ENCODE measurements at regions of chr1 and their contacts with region 1.

Region 1: DNA sequence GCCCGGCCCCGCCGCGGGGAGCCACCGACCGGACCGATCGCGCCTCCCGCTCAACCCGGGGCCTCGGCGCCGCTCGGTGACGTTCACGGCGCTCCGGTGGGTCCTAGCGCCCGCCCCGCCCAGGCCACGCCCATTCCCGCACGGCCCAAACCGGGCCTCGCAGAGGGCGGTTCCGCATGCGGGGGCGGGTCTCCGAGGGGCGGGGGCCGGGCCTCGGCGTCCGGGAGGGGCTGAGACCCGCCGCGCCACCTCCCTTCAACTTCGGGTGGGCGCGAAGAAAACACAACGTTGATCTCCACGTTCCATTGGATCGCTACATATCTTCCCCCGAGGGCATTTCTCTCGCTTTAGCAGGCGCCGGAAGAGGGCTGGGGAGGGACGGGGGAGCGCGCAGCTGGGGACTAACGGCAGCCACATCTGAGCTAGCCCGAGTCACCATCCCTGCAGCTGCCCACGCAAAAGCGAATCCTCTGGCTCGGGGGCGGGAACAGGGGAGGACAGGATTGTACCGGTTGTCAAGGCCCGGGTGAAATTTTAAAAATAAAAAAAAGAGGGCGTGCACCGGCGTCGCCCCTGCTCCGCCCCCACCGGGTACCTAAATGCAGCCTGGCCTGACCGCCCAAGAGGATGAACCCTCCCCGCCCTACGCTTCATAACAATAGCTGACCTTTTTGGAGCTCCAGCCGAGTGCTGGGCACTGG is at the start of gene MAD2L2:
- DNase-seq: peak; percentile 65 to 75
- ATAC-seq: peak; percentile 94 to 96
- H3K4me3 ChIP-seq: peak within 1 kb of the TSS; percentile 69 to 91 (median 88)
- H3K27ac ChIP-seq: peak within 1 kb of the TSS; percentile 73 to 86 (median 82)
- H3K4me1 ChIP-seq: peaks cover 3 to 10% of the 10 kb centered on the region in 2 donors
- H3K27me3 ChIP-seq: no peaks in the 10 kb centered on the region
- CTCF ChIP-seq: no peak
- POLR2A ChIP-seq: peak; percentile 46 to 63
- total RNA-seq, gene MAD2L2: 41.2 to 57.4 (median 46.9) TPM

Region 2: GRCh38 chr1:11272832-11273594 is 408.2 kb before region 1 on chr1 and contains the start of gene UBIAD1:
- in situ Hi-C with region 1: no loop called
- intact Hi-C with region 1: loop called (anchors 5 kb)
- DNase-seq: peak; percentile 82 to 83
- ATAC-seq: peak; percentile 93 to 95
- H3K4me3 ChIP-seq: peak within 1 kb of the TSS; percentile 69 to 96 (median 92)
- H3K27ac ChIP-seq: peak within 1 kb of the TSS; percentile 93 to 99 (median 96)
- H3K4me1 ChIP-seq: peaks cover 26 to 29% of the 10 kb centered on the region in 2 donors
- H3K27me3 ChIP-seq: no peaks in the 10 kb centered on the region
- CTCF ChIP-seq: peak in 1 of 5 experiments; percentile 20
- POLR2A ChIP-seq: peak; percentile 63 to 70
- total RNA-seq, gene UBIAD1: 15.1 to 24.5 (median 20.2) TPM

Region 3: DNA sequence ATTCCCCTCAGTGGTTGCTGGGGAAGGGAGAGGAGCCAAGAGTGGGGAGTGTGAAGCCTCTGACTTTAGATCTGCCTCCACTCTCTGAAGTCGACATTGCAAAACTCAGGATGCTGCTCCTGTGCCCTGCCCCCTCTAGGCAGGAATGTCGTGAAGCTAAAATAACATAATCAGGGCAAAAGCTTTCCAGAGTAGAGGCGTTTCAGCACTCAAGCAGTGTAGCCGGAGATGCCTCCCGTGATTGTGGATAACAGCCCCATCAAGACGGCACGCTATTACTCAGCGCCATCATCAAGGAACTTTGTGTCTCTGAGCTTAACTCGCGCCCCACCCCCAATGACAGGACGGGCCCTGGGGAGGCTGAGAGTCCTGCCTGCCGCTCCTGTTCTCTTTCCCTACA is 87.0 kb before region 1 on chr1:
- in situ Hi-C with region 1: no loop called
- intact Hi-C with region 1: no loop called
- DNase-seq: no peak
- ATAC-seq: peak in 1 of 2 donors; percentile 23
- H3K4me3 ChIP-seq: no peak overlapping the region
- H3K27ac ChIP-seq: no peak overlapping the region
- H3K4me1 ChIP-seq: no peaks in the 10 kb centered on the region
- H3K27me3 ChIP-seq: peaks cover 2 to 10% (median 7%) of the 10 kb centered on the region in 3 donors
- CTCF ChIP-seq: no peak
- POLR2A ChIP-seq: no peak

Region 4: GRCh38 chr1:11670747-11671146 is 10.5 kb before region 1 on chr1:
- in situ Hi-C with region 1: no loop called
- intact Hi-C with region 1: loop called (anchors 2 kb)
- DNase-seq: no peak
- ATAC-seq: no peak
- H3K4me3 ChIP-seq: no peak overlapping the region
- H3K27ac ChIP-seq: no peak overlapping the region
- H3K4me1 ChIP-seq: no peaks in the 10 kb centered on the region
- H3K27me3 ChIP-seq: no peaks in the 10 kb centered on the region
- CTCF ChIP-seq: no peak
- POLR2A ChIP-seq: no peak

Region 5: DNA sequence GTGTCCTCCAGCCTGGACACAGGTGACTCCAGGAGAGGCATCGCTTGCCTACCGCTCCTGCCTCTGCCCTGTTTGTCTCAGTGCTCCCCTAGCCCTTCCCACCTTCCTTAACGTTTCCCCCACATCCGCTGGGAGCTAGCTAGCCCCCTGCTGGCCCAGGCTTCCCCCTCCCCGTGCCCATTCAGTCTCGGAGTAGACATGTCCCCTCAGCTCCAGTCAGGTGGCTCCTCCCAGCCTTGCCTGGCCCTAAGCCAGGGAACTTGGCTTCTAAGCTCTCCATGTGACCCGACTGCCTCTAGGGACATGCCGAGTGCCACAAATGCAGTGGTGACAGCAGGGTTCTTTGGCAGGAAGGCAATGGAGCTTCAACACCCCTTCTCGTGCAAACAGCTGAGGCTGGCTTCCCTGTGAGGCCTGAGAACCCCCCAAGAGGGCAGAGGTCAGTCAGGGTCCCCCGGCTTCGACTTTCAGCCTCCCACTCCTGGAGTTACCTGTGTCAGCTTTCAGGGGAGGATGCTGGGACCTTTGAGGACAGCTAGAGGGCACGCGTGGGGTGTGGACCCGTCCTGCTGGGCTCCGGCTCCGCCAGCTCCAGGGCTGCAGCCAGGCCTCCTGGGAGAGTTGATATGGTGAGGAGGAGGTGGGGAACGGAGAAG is 26.5 kb after region 1 on chr1:
- in situ Hi-C with region 1: no loop called
- intact Hi-C with region 1: no loop called
- DNase-seq: peak in 1 of 2 donors; percentile 55
- ATAC-seq: peak; percentile 39 to 80
- H3K4me3 ChIP-seq: no peak overlapping the region
- H3K27ac ChIP-seq: no peak overlapping the region
- H3K4me1 ChIP-seq: no peaks in the 10 kb centered on the region
- H3K27me3 ChIP-seq: peaks cover 0 to 17% (median 4%) of the 10 kb centered on the region in 3 donors
- CTCF ChIP-seq: no peak
- POLR2A ChIP-seq: no peak

Measured in gastrocnemius medialis (tissue), 4 donors.